ENCODE measurements at regions of chr12 and their contacts with region 1.

Region 1: DNA sequence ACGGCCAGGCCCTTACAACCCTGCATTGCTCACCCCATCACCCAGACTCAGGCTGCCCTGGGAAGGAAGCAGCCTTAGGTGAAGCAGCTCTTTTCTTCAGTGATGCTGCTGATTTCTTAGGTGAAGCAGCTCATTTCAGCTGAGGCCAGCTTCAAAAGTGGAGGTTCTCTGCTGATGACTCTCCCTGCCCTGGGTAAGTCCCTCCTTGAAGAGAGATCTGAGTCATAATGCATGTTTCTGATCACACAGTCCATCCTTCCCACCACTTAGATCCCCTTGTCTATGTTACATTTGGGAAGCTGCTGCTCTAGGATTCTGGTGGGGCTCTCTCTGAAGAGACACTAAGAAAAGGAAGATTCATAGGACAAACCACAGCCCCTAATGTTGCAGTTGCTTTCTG is 17.2 kb upstream of the ZNF140 start:
- DNase-seq: no peak
- H3K4me3 ChIP-seq: no peak overlapping the region
- H3K27ac ChIP-seq: no peak overlapping the region
- H3K4me1 ChIP-seq: no peaks in the 10 kb centered on the region
- H3K27me3 ChIP-seq: no peaks in the 10 kb centered on the region
- CTCF ChIP-seq: no peak
- POLR2A ChIP-seq: no peak

Region 2: DNA sequence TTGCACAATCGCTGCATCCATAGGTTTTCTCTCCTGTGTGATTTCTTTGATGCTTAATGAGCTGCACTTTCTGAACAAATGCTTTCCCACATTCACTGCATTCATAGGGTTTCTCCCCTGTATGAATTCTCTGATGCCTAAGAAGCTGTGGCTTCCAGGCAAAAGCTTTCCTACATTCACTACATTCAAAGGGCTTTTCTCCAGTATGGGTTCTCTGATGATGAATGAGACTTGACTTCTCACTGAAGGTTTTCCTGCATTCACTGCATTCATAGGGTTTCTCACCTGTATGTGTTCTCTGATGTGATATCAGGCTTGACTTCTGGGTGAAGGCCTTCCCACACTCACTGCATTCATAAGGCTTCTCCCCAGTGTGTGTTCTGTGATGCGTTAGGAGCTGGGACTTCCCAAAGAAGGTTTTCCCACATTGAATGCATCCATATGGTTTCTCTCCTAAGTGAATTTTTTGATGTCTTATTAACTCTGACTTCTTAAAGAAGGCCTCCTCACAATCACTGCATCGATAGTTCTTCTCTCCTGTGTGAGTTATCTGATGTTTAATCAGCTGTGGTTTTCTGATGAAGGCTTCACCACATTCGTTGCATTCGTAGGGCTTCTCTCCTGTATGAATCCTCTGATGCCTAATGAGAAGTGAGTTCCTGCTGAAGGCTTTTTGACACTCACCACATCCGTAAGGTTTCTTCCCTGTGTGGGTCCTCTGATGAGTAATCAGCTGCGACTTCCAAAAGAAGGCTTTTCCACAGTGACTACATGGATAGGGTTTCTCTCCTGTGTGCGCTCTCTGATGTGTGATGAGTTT is 137.7 kb before region 1 on chr12:
- intact Hi-C with region 1: loop called (anchors 5 kb)
- DNase-seq: no peak
- H3K4me3 ChIP-seq: no peak overlapping the region
- H3K27ac ChIP-seq: no peak overlapping the region
- H3K4me1 ChIP-seq: no peaks in the 10 kb centered on the region
- H3K27me3 ChIP-seq: no peaks in the 10 kb centered on the region
- CTCF ChIP-seq: no peak
- POLR2A ChIP-seq: no peak